ENCODE measurements at regions of chr11 and their contacts with region 1.

Region 1: GRCh38 chr11:44029977-44030911 is 17.5 kb upstream of the ACCSL start:
- DNase-seq: no peak
- H3K4me3 ChIP-seq: no peak overlapping the region
- H3K27ac ChIP-seq: peak overlapping the region in 46 of 59 donors; percentile 0 to 90 (median 42)
- H3K27me3 ChIP-seq: no peaks in the 10 kb centered on the region
- CTCF ChIP-seq: no peak

Region 2: GRCh38 chr11:43997022-43997665 is 33.1 kb before region 1 on chr11:
- intact Hi-C with region 1: loop called in 1 of 2 experiments (anchors 5 kb)
- DNase-seq: peak in 1 of 10 donors; percentile 21
- H3K4me3 ChIP-seq: no peak overlapping the region
- H3K27ac ChIP-seq: no peak overlapping the region
- H3K27me3 ChIP-seq: peaks cover 0 to 2% (median 0%) of the 10 kb centered on the region in 45 donors
- CTCF ChIP-seq: no peak